A673 (cell line): ENCODE measurements at regions of chr21 and their contacts with region 1.

Region 1: DNA sequence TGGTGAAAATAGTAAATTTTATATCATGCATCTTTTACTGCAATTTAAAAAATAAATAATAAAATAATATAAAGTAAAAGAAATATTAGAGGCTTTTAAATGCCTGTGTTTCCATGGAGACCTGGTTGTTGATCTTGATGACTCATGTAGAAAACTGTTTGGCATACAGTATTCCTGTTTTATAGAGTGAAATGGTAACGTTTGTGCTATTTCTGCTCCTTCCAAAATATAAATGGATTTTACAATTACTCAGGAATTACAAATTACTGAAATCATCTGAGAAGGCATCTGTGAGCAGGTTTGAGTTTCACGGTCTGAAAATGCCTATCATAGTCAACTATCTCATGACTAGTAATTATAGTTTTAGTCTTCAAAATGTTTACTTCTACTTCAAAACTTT is 98.4 kb upstream of the USP25 start:
- DNase-seq: no peak
- H3K4me3 ChIP-seq: no peak overlapping the region
- H3K27ac ChIP-seq: no peak overlapping the region
- H3K4me1 ChIP-seq: no peaks in the 10 kb centered on the region
- H3K27me3 ChIP-seq: no peaks in the 10 kb centered on the region
- CTCF ChIP-seq: no peak

Region 2: GRCh38 chr21:15826147-15826780 is 194.9 kb after region 1 on chr21:
- CTCF ChIA-PET with region 1: no interaction called
- POLR2A ChIA-PET with region 1: no interaction called
- intact Hi-C with region 1: loop called (anchors 10 kb)
- DNase-seq: peak; percentile 60
- H3K4me3 ChIP-seq: no peak overlapping the region
- H3K27ac ChIP-seq: no peak overlapping the region
- H3K4me1 ChIP-seq: peaks cover 13% of the 10 kb centered on the region
- H3K27me3 ChIP-seq: no peaks in the 10 kb centered on the region
- CTCF ChIP-seq: peak; percentile 65